ENCODE measurements at regions of chr3 and their contacts with region 1.

Region 1: GRCh38 chr3:188531210-188531609 is 377.3 kb downstream of the LPP start:
- DNase-seq: peak; percentile 78
- ATAC-seq: no peak; the same call in 1 of the 2 replicates
- H3K4me3 ChIP-seq: no peak overlapping the region
- H3K27ac ChIP-seq: peak overlapping the region; percentile 18
- H3K4me1 ChIP-seq: peaks cover 61% of the 10 kb centered on the region
- H3K27me3 ChIP-seq: no peaks in the 10 kb centered on the region
- CTCF ChIP-seq: no peak

Region 2: GRCh38 chr3:188472331-188472730 is 58.9 kb before region 1 on chr3:
- CTCF ChIA-PET with region 1: no interaction called
- POLR2A ChIA-PET with region 1: no interaction called
- intact Hi-C with region 1: no loop called
- DNase-seq: peak; percentile 3
- ATAC-seq: no peak; the same call in 1 of the 2 replicates
- H3K4me3 ChIP-seq: no peak overlapping the region
- H3K27ac ChIP-seq: no peak overlapping the region
- H3K4me1 ChIP-seq: peaks cover 3% of the 10 kb centered on the region; the same call in 1 of the 2 replicates
- H3K27me3 ChIP-seq: no peaks in the 10 kb centered on the region
- CTCF ChIP-seq: no peak

Region 3: GRCh38 chr3:188489639-188490405 is 41.4 kb before region 1 on chr3:
- CTCF ChIA-PET with region 1: no interaction called
- POLR2A ChIA-PET with region 1: no interaction called
- intact Hi-C with region 1: no loop called
- DNase-seq: no peak
- ATAC-seq: peak; percentile 10; the same call in 1 of the 2 replicates
- H3K4me3 ChIP-seq: no peak overlapping the region
- H3K27ac ChIP-seq: no peak overlapping the region
- H3K4me1 ChIP-seq: peaks cover 21% of the 10 kb centered on the region
- H3K27me3 ChIP-seq: no peaks in the 10 kb centered on the region
- CTCF ChIP-seq: no peak

Region 4: GRCh38 chr3:188546835-188547670 is 15.8 kb after region 1 on chr3:
- CTCF ChIA-PET with region 1: no interaction called
- POLR2A ChIA-PET with region 1: no interaction called
- intact Hi-C with region 1: loop called (anchors 2 kb)
- DNase-seq: peak; percentile 82
- ATAC-seq: peak; percentile 89
- H3K4me3 ChIP-seq: no peak overlapping the region
- H3K27ac ChIP-seq: peak overlapping the region; percentile 72
- H3K4me1 ChIP-seq: peaks cover 35% of the 10 kb centered on the region
- H3K27me3 ChIP-seq: no peaks in the 10 kb centered on the region
- CTCF ChIP-seq: no peak

Region 5: DNA sequence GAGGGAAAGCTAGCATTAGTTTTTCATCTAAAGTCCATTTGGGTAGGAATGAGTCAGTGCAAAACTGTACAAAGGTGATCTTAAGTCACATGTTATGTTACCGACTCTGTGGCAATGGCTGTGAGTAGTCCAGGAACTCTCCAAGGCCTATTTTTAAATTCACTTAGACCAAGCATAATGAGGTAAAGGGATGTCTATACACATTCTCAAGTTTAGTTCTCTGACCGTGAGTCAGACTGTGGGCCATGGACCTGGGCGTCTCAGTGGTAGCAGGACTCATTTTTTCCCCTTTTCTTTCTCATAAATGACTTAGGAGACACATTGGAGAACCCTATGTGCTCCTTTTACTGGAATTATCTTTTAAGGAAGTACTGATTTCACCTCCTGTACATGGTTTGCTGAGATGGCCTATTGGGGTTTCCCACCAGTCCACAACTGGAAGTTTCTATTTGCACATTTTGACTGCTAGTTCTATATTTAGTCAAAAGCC is 151.9 kb after region 1 on chr3:
- CTCF ChIA-PET with region 1: no interaction called
- POLR2A ChIA-PET with region 1: no interaction called
- intact Hi-C with region 1: loop called (anchors 10 kb)
- DNase-seq: peak; percentile 59
- ATAC-seq: peak; percentile 66
- H3K4me3 ChIP-seq: no peak overlapping the region
- H3K27ac ChIP-seq: peak overlapping the region; percentile 29
- H3K4me1 ChIP-seq: peaks cover 20% of the 10 kb centered on the region
- H3K27me3 ChIP-seq: no peaks in the 10 kb centered on the region
- CTCF ChIP-seq: no peak

Measured in PC-3 (cell line).